ENCODE measurements at regions of chrX and their contacts with region 1.

Region 1: GRCh38 chrX:1591102-1591900 is at the start of gene AKAP17A:
- DNase-seq: peak; percentile 97 to 99
- ATAC-seq: peak; percentile 93 to 94 (median 94)
- H3K4me3 ChIP-seq: peak within 1 kb of the TSS; percentile 91
- H3K4me3 Mint-ChIP-seq: peak within 1 kb of the TSS; percentile 92
- H3K27ac ChIP-seq: peak within 1 kb of the TSS; percentile 85
- H3K27ac Mint-ChIP-seq: peak within 1 kb of the TSS; percentile 87 to 93
- H3K4me1 ChIP-seq: peaks cover 29% of the 10 kb centered on the region
- H3K4me1 Mint-ChIP-seq: peaks cover 20 to 35% of the 10 kb centered on the region in 2 donors
- H3K27me3 ChIP-seq: no peaks in the 10 kb centered on the region
- H3K27me3 Mint-ChIP-seq: no peaks in the 10 kb centered on the region
- CTCF ChIP-seq: peak; percentile 9
- total RNA-seq, gene AKAP17A: 120 to 141 (median 121) TPM

Region 2: DNA sequence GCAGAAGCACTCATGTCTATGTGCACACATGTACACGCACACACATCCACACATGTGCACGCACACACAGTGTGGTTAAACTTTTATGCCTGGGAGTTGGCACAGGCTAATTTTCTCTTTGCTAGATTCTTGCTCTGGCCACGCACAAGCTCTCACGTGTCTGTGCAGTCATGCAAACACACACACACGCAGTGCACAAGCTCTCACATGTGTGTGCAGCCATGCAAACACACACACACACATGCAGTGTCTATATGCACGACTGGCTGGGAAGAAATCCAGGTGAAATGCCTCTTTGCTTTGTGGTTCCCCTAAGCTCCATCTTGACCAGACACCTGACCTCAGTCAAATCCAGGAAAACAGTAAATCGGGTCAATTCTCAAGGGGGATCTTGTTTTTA is 822.7 kb before region 1 on chrX:
- intact Hi-C with region 1: no loop called
- DNase-seq: no peak
- ATAC-seq: no peak
- H3K4me3 ChIP-seq: no peak overlapping the region
- H3K4me3 Mint-ChIP-seq: no peak overlapping the region
- H3K27ac ChIP-seq: no peak overlapping the region
- H3K27ac Mint-ChIP-seq: no peak overlapping the region
- H3K4me1 ChIP-seq: no peaks in the 10 kb centered on the region
- H3K4me1 Mint-ChIP-seq: no peaks in the 10 kb centered on the region
- H3K27me3 ChIP-seq: no peaks in the 10 kb centered on the region
- H3K27me3 Mint-ChIP-seq: no peaks in the 10 kb centered on the region
- CTCF ChIP-seq: no peak

Region 3: DNA sequence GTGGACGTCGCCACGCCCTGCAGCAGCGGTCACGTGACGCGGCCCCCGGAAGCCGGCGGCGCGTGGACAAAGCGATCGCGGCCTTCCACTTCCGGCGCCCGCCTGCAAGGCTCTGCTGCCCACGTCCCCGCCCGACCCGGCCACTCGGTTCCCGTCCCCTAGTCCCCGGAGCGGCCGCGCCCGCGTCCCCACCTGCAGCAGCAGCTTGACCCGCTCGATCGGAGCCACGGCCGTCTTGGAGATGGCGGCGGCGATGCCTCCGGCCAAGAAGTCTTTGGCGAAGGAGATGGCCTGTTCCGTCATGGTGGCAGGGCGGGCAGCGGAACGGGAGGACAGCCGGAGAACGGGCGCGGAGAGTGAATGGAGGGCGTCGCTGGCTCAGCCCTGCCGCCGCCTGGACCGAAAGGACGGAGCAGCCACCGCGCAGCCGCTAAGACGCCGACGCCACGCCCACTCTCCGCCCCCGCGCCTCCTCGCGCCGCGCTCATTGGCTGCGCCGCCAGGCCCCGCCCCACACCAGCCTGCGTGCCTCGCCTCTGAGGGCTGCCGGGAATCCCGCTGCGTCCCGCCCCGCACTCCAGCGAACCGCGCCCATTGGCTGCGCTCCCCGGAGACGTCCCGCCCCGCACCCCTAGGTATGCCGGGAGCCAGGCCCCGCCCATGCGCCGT is 199.5 kb before region 1 on chrX and contains the start of gene SLC25A6:
- intact Hi-C with region 1: loop called (anchors 5 kb)
- DNase-seq: peak; percentile 99 to 100
- ATAC-seq: peak; percentile 93 to 98 (median 93)
- H3K4me3 ChIP-seq: peak within 1 kb of the TSS; percentile 99
- H3K4me3 Mint-ChIP-seq: peak within 1 kb of the TSS; percentile 92
- H3K27ac ChIP-seq: peak within 1 kb of the TSS; percentile 95
- H3K27ac Mint-ChIP-seq: peak within 1 kb of the TSS; percentile 85 to 94
- H3K4me1 ChIP-seq: peaks cover 24% of the 10 kb centered on the region
- H3K4me1 Mint-ChIP-seq: peaks cover 37 to 61% of the 10 kb centered on the region in 2 donors
- H3K27me3 ChIP-seq: no peaks in the 10 kb centered on the region
- H3K27me3 Mint-ChIP-seq: no peaks in the 10 kb centered on the region
- CTCF ChIP-seq: no peak
- total RNA-seq, gene SLC25A6: 157 to 197 (median 178) TPM

Region 4: DNA sequence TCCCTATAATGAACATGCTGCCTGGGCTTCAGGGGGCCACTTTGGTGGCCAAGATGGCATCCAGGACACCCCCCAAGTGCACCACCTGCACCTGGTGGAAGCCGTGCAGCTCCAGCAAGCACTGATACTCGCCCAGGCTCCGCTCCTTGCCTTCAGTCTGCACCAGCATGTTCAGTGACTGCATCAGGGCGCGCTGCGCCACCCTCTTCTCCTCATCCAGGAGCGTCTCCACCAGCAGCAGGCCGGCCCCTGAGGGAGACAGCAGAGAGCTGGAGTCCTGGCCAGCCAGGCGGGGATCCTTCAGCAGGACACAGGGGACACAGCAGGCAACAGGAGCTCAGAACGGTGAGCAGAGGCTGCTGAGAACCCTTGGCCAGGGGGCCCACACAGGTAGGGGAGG is 188.1 kb before region 1 on chrX:
- intact Hi-C with region 1: no loop called
- DNase-seq: no peak
- ATAC-seq: no peak
- H3K4me3 ChIP-seq: no peak overlapping the region
- H3K4me3 Mint-ChIP-seq: no peak overlapping the region
- H3K27ac ChIP-seq: no peak overlapping the region
- H3K27ac Mint-ChIP-seq: no peak overlapping the region
- H3K4me1 ChIP-seq: no peaks in the 10 kb centered on the region
- H3K4me1 Mint-ChIP-seq: no peaks in the 10 kb centered on the region
- H3K27me3 ChIP-seq: no peaks in the 10 kb centered on the region
- H3K27me3 Mint-ChIP-seq: no peaks in the 10 kb centered on the region
- CTCF ChIP-seq: no peak

Region 5: DNA sequence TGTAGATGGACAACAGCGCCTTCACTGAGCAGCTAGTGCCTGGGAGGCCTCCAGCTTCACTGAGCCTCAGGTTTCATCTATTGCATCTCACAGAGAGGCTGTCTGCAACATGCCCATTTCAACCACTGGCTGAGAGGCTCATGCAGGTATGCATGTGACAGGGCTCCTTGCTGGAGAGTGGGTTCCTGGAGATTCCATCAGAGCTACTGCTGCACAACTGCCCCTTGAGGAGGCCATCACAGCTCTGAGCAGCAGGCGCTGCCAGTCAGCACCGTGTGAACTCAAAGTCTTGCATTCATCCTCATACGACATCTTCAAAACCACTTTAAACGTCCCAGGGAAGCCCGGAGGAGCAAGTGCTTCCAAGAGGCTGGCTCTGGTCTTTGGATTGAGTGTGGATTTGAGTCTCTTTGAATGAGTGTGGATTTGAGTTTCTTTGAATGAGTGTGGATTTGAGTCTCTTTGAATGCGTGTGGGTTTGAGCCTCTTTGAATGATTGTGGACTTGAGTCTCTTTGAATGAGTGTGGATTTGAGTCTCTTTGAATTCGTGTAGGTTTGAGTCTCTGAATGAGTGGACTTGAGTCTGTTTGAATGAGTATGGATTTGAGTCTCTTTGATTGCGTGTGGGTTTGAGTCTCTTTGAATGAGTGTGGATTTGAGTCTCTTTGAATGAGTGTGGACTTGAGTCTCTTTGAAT is 63.0 kb before region 1 on chrX:
- intact Hi-C with region 1: no loop called
- DNase-seq: no peak
- ATAC-seq: no peak
- H3K4me3 ChIP-seq: no peak overlapping the region
- H3K4me3 Mint-ChIP-seq: no peak overlapping the region
- H3K27ac ChIP-seq: no peak overlapping the region
- H3K27ac Mint-ChIP-seq: no peak overlapping the region
- H3K4me1 ChIP-seq: peaks cover 29% of the 10 kb centered on the region
- H3K4me1 Mint-ChIP-seq: peaks cover 0 to 6% of the 10 kb centered on the region in 2 donors
- H3K27me3 ChIP-seq: no peaks in the 10 kb centered on the region
- H3K27me3 Mint-ChIP-seq: no peaks in the 10 kb centered on the region
- CTCF ChIP-seq: no peak

Region 6: GRCh38 chrX:2690856-2691542 is 1099.7 kb after region 1 on chrX and contains the start of gene CD99:
- intact Hi-C with region 1: loop called (anchors 10 kb)
- DNase-seq: peak; percentile 77 to 94
- ATAC-seq: peak; percentile 87 to 96 (median 93)
- H3K4me3 ChIP-seq: peak within 1 kb of the TSS; percentile 82
- H3K4me3 Mint-ChIP-seq: peak within 1 kb of the TSS; percentile 99
- H3K27ac ChIP-seq: peak within 1 kb of the TSS; percentile 60
- H3K27ac Mint-ChIP-seq: peak within 1 kb of the TSS; percentile 86 to 88
- H3K4me1 ChIP-seq: peaks cover 45% of the 10 kb centered on the region
- H3K4me1 Mint-ChIP-seq: peaks cover 37 to 39% of the 10 kb centered on the region in 2 donors
- H3K27me3 ChIP-seq: no peaks in the 10 kb centered on the region
- H3K27me3 Mint-ChIP-seq: no peaks in the 10 kb centered on the region
- CTCF ChIP-seq: no peak
- total RNA-seq, gene CD99: 312 to 340 (median 333) TPM